Ascending aorta (tissue), 2 donors: ENCODE measurements at regions of chr2 and their contacts with region 1.

Region 1: DNA sequence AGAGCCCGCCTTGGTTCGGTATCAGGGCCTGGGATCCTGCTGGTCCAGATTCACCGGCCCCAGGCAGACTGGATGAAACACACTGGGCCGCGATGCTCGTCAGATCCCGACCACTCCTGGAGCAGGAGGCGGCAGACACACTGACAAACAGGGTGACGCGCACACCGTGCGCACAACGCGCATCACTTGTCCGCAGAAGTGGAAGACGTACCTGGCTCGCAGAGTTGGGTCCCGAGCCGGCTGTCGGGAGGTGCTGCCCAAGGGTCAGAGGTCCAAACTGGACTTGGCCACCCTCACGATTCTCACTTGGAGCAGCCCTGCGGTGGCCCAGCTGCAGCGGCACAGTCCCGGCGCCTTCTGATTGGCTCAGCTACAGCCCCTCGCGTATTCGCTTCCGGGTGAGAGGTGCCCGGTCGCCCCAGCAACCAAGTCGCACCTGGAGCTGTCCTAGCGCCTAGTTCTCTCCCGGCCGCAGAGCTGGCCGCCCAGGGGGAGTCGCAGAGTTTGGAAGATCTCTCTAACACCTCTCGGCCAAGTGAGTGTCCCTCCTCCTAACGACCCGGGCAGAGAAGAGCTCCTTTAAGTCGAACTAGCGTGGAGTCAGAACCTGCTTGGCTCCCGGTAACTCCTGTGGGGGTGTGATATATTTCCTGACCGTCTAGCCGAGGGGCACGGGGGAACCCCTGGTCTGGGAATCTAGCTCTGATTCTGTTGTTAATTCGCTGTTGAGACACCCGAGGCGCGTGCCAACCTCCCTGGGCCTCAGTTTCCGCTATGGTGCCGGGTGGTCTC is at the starts of genes DHX57 and MORN2:
- DNase-seq: peak; percentile 48 to 92
- H3K4me3 ChIP-seq: peak within 1 kb of the TSS; percentile 65 to 81
- H3K27ac ChIP-seq: peak within 1 kb of the TSS; percentile 63 to 64
- H3K4me1 ChIP-seq: peaks cover 4 to 16% of the 10 kb centered on the region in 2 donors
- H3K27me3 ChIP-seq: no peaks in the 10 kb centered on the region
- CTCF ChIP-seq: no peak
- total RNA-seq, gene DHX57: 4.3 TPM
- total RNA-seq, gene MORN2: not detected

Region 2: GRCh38 chr2:38778687-38779082 is 97.1 kb before region 1 on chr2:
- intact Hi-C with region 1: loop called (anchors 5 kb)
- DNase-seq: no peak
- H3K4me3 ChIP-seq: peak overlapping the region; percentile 62 to 78
- H3K27ac ChIP-seq: no peak overlapping the region
- H3K4me1 ChIP-seq: peaks cover 0 to 4% of the 10 kb centered on the region in 2 donors
- H3K27me3 ChIP-seq: no peaks in the 10 kb centered on the region
- CTCF ChIP-seq: no peak